ENCODE measurements at regions of chr6 and their contacts with region 1.

Region 1: DNA sequence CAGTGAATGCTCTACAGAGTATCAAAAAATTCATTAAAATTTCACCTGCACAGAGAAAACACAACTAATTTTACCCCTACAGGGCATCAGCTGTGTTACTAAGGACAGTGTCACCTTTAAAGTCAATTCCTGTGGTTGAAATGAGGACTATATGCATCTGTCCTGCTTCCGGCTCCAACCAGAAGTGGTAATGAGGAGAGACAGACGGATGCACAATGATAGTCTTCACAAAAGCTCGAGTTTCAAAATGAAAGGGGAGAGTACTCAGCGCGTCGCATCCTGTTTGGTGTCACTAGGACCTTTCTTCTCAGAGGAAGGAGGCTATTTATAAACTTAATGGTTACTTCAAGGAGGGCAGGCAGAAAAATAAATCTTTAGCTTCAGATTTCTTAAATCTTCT is 86.5 kb downstream of the LYRM4 start:
- DNase-seq: peak; percentile 63
- H3K4me3 Mint-ChIP-seq: peak overlapping the region; percentile 45
- H3K27ac Mint-ChIP-seq: peak overlapping the region; percentile 83
- H3K4me1 Mint-ChIP-seq: peaks cover 48% of the 10 kb centered on the region
- H3K27me3 Mint-ChIP-seq: peaks cover 2% of the 10 kb centered on the region

Region 2: GRCh38 chr6:3421791-3422434 is 1752.3 kb before region 1 on chr6:
- intact Hi-C with region 1: no loop called
- DNase-seq: no peak
- H3K4me3 Mint-ChIP-seq: no peak overlapping the region
- H3K27ac Mint-ChIP-seq: no peak overlapping the region
- H3K4me1 Mint-ChIP-seq: no peaks in the 10 kb centered on the region
- H3K27me3 Mint-ChIP-seq: peaks cover 9% of the 10 kb centered on the region

Region 3: DNA sequence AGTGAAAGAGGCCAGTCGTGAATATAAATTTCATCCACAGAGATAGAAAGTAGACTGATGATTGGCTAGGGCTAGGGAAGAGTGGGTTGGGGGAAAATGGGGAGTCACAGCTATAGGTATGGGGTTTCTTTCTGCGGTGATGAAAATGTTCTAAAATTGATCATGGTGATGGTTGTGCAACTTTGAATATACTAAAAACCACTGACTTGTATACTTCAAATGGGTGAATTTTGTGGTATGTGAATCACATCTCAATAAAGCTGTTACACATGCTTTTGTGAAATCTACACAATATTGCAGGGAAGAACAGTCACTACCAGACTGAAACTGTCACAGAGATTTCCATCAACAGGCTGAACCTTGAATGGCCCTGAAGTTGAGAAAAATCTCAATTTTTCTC is 25.0 kb after region 1 on chr6:
- intact Hi-C with region 1: loop called (anchors 1 kb)
- DNase-seq: no peak
- H3K4me3 Mint-ChIP-seq: no peak overlapping the region
- H3K27ac Mint-ChIP-seq: peak overlapping the region; percentile 49
- H3K4me1 Mint-ChIP-seq: peaks cover 9% of the 10 kb centered on the region
- H3K27me3 Mint-ChIP-seq: no peaks in the 10 kb centered on the region

Region 4: DNA sequence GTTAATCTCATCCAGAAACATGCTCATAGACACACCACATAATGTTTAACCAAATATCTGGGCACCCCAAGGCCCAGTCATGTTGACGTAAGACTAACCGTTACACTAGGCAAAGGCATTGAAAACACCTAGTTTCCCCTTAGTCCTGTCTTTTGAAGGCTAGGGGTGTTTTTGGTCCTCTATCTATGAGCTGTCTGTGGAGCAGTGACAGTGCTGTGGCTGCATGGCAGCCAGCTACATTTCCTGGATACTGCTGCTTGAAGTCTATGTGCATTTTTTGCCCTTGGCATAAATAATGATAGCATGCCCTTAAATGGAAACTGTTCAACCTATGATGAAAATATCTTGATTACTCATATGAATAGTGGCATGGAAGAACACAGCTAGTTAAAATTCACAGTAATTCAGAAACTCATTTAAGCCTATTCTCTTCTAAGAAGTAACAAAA is 105.7 kb after region 1 on chr6:
- intact Hi-C with region 1: loop called (anchors 1 kb)
- DNase-seq: peak; percentile 10
- H3K4me3 Mint-ChIP-seq: peak overlapping the region; percentile 13
- H3K27ac Mint-ChIP-seq: peak overlapping the region; percentile 84
- H3K4me1 Mint-ChIP-seq: peaks cover 49% of the 10 kb centered on the region
- H3K27me3 Mint-ChIP-seq: peaks cover 2% of the 10 kb centered on the region

Region 5: DNA sequence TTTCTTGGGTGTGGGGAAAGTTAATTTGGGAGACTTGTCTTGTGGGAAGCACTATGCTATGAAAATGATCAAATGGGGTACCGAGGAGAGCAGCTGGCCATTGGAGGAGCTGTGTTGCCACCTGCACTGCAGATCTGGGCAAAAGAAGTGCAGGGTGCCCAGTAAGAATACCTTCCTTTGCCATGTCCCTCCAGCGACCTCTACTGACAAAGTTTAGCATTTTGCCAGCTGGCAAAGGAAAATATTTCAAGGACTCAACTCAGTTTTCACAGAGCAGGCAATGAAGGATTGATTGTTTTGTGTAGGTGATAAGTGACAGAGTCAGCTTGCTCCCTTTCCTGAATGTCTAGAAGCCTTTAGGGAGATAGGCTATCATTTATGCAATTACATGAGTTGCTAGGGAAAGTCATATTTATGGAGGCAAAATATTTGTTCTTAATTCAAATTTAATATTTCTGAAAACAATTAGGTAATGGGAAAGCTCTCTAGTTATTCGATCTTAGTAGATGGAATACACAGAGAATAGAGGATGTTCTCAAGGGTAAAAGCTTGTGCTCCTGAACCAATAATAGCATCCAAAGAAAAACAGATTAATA is 205.5 kb after region 1 on chr6:
- intact Hi-C with region 1: loop called (anchors 1 kb)
- DNase-seq: peak; percentile 2
- H3K4me3 Mint-ChIP-seq: no peak overlapping the region
- H3K27ac Mint-ChIP-seq: no peak overlapping the region
- H3K4me1 Mint-ChIP-seq: no peaks in the 10 kb centered on the region
- H3K27me3 Mint-ChIP-seq: no peaks in the 10 kb centered on the region